Activated CD4-positive, alpha-beta memory T cell treated with anti-CD3 and anti-CD28 coated beads, Interleukin-2, amount 10 ng/mL, durations not matched to agents 7 days and 5 days (primary cell): ENCODE measurements at regions of chr1 and their contacts with region 1.

Region 1: GRCh38 chr1:44696789-44697345 is 22.4 kb downstream of the ARMH1 start:
- DNase-seq: peak; percentile 58
- H3K4me3 Mint-ChIP-seq: no peak overlapping the region
- H3K27ac Mint-ChIP-seq: peak overlapping the region; percentile 83
- H3K4me1 Mint-ChIP-seq: peaks cover 21% of the 10 kb centered on the region
- H3K27me3 Mint-ChIP-seq: no peaks in the 10 kb centered on the region

Region 2: GRCh38 chr1:44707959-44708831 is 11.3 kb after region 1 on chr1:
- CTCF ChIA-PET with region 1: interaction called, 16 read pairs
- POLR2A ChIA-PET with region 1: interaction called, 5 read pairs
- DNase-seq: no peak
- H3K4me3 Mint-ChIP-seq: peak overlapping the region; percentile 5
- H3K27ac Mint-ChIP-seq: no peak overlapping the region
- H3K4me1 Mint-ChIP-seq: peaks cover 14% of the 10 kb centered on the region
- H3K27me3 Mint-ChIP-seq: peaks cover 17% of the 10 kb centered on the region

Region 3: GRCh38 chr1:44747878-44748277 is 51.0 kb after region 1 on chr1:
- CTCF ChIA-PET with region 1: no interaction called
- POLR2A ChIA-PET with region 1: no interaction called
- DNase-seq: no peak
- H3K4me3 Mint-ChIP-seq: no peak overlapping the region
- H3K27ac Mint-ChIP-seq: peak overlapping the region; percentile 40
- H3K4me1 Mint-ChIP-seq: peaks cover 36% of the 10 kb centered on the region
- H3K27me3 Mint-ChIP-seq: no peaks in the 10 kb centered on the region